Esophagus muscularis mucosa (tissue), 4 donors: ENCODE measurements at regions of chr1 and their contacts with region 1.

Region 1: GRCh38 chr1:67500413-67500959 is 70.3 kb upstream of the SERBP1 start:
- DNase-seq: peak; percentile 95
- H3K4me3 ChIP-seq: no peak overlapping the region
- H3K27ac ChIP-seq: no peak overlapping the region
- H3K4me1 ChIP-seq: peaks cover 0 to 7% (median 6%) of the 10 kb centered on the region in 4 donors
- H3K27me3 ChIP-seq: peaks cover 0 to 6% (median 0%) of the 10 kb centered on the region in 4 donors
- CTCF ChIP-seq: peak; percentile 86 to 95 (median 93)
- EP300 ChIP-seq: no peak
- POLR2A ChIP-seq: no peak

Region 2: GRCh38 chr1:67230539-67230938 is 269.9 kb before region 1 on chr1:
- intact Hi-C with region 1: loop called (anchors 5 kb)
- DNase-seq: no peak
- H3K4me3 ChIP-seq: no peak overlapping the region
- H3K27ac ChIP-seq: no peak overlapping the region
- H3K4me1 ChIP-seq: no peaks in the 10 kb centered on the region
- H3K27me3 ChIP-seq: no peaks in the 10 kb centered on the region
- CTCF ChIP-seq: no peak
- EP300 ChIP-seq: no peak
- POLR2A ChIP-seq: no peak

Region 3: GRCh38 chr1:67323087-67323486 is 177.4 kb before region 1 on chr1:
- intact Hi-C with region 1: no loop called
- DNase-seq: no peak
- H3K4me3 ChIP-seq: no peak overlapping the region
- H3K27ac ChIP-seq: no peak overlapping the region
- H3K4me1 ChIP-seq: no peaks in the 10 kb centered on the region
- H3K27me3 ChIP-seq: no peaks in the 10 kb centered on the region
- CTCF ChIP-seq: no peak
- EP300 ChIP-seq: no peak
- POLR2A ChIP-seq: no peak

Region 4: DNA sequence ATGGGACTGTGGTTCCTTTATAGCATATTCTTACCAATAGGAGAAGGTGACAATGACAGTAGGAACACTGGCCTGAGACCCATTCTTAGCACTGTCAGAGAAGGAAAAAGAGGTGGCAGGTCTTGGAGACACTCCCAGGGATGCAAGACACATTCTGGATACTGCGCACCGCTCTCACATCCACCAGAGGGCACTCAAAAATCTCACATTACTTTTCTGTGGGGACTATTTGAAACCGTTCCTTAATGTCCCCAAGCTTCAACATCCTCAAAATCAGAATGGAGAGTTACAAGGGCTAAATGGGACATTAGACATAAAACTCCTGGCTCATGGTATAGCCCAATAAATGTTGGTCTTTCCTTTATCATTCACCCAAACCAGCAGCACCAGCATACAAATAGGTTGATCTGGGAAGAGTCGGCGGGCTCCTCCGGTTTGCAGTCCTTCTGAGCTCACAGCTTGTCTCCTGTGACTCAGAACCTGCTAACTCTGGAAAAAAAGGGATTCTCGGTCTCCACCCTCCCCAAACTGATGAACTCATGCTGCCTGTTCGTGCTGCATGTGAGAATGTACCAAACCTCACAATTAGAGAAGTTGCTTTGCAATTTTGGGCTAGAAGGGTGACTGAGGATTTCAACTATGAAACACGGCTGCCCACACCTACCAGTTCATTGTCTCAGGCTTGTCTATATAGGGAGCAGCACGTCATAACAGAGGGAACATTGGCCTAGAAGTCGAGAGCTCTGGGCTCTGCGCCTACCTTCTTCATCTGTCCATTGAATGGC is 152.6 kb before region 1 on chr1:
- intact Hi-C with region 1: loop called (anchors 2 kb)
- DNase-seq: no peak
- H3K4me3 ChIP-seq: no peak overlapping the region
- H3K27ac ChIP-seq: no peak overlapping the region
- H3K4me1 ChIP-seq: peaks cover 0 to 5% (median 0%) of the 10 kb centered on the region in 4 donors
- H3K27me3 ChIP-seq: no peaks in the 10 kb centered on the region
- CTCF ChIP-seq: peak; percentile 59 to 76 (median 68)
- EP300 ChIP-seq: no peak
- POLR2A ChIP-seq: no peak

Region 5: DNA sequence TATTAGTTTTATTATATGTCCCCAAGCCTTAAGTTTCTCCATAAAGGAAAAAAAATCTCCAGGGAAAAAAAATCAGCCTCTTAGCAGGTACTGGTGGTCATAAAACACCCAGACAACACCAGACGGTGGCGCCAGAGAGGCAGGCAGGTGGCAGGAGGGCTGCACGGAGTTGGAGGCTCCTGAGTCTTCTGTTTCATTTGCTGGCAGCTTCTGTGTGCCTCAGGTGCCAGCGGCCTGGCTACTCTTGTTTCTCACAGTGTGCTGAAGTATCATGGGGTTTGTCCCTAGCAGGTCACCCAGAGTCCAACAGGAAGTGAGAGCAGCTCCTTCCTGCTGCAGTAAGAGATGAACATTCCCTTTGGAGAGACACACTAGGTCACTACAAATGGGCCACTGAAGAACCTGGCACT is 61.2 kb after region 1 on chr1:
- intact Hi-C with region 1: no loop called
- DNase-seq: no peak
- H3K4me3 ChIP-seq: no peak overlapping the region
- H3K27ac ChIP-seq: peak overlapping the region in 2 of 4 donors; percentile 6 to 12
- H3K4me1 ChIP-seq: peaks cover 14 to 31% (median 26%) of the 10 kb centered on the region in 4 donors
- H3K27me3 ChIP-seq: no peaks in the 10 kb centered on the region
- CTCF ChIP-seq: peak; percentile 78 to 87 (median 81)
- EP300 ChIP-seq: no peak
- POLR2A ChIP-seq: no peak

Region 6: GRCh38 chr1:67635055-67635809 is 134.7 kb after region 1 on chr1:
- intact Hi-C with region 1: no loop called
- DNase-seq: peak; percentile 39
- H3K4me3 ChIP-seq: no peak overlapping the region
- H3K27ac ChIP-seq: no peak overlapping the region
- H3K4me1 ChIP-seq: peaks cover 0 to under 1% (median under 1%) of the 10 kb centered on the region in 4 donors
- H3K27me3 ChIP-seq: no peaks in the 10 kb centered on the region
- CTCF ChIP-seq: no peak
- EP300 ChIP-seq: no peak
- POLR2A ChIP-seq: no peak